ENCODE measurements at regions of chr6 and their contacts with region 1.

Region 1: GRCh38 chr6:20056350-20056992 is 155.8 kb downstream of the MBOAT1 start:
- DNase-seq: no peak
- H3K4me3 ChIP-seq: no peak overlapping the region
- H3K27ac ChIP-seq: no peak overlapping the region
- H3K4me1 ChIP-seq: no peaks in the 10 kb centered on the region
- H3K27me3 ChIP-seq: no peaks in the 10 kb centered on the region
- CTCF ChIP-seq: peak; percentile 34

Region 2: DNA sequence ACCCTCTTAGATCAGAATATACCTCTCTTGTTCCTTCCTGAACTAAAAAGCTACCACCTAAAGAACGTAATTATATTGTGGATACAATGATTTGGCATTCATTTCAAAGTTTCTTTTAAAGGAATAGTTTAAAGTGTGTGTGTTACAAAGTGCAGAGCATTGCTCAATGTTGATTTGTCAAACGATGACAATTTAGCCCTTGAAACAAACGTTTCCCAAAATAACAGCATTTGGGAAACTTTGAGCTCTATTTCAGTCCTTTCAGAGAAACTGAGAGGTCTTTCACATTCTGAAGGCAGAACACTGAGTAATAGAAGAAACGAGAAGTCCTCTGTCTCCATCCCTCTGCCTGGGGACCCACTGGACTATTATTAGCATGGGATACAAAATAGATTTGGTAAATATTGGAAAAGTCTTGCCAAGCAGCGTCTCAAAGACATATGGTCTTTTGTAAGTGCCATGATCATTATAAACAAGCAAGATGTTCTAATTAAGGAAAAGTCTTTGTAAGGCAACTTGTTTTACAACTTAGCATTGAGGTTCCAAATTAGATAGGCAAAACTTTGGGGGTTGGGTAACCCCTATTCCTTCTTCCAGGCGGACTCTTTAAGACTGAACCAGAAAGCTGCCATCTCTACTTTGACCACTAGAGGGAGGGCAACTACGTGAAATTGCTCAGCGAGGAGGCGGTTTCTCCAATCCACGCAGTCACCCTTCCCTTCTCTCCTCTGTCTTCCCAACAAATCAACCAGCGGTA is 1460.5 kb before region 1 on chr6:
- intact Hi-C with region 1: loop called (anchors 10 kb)
- DNase-seq: peak; percentile 73
- H3K4me3 ChIP-seq: no peak overlapping the region
- H3K27ac ChIP-seq: no peak overlapping the region
- H3K4me1 ChIP-seq: no peaks in the 10 kb centered on the region
- H3K27me3 ChIP-seq: no peaks in the 10 kb centered on the region
- CTCF ChIP-seq: peak; percentile 88

Region 3: GRCh38 chr6:18752278-18753068 is 1304.0 kb before region 1 on chr6:
- intact Hi-C with region 1: loop called (anchors 10 kb)
- DNase-seq: no peak
- H3K4me3 ChIP-seq: no peak overlapping the region
- H3K27ac ChIP-seq: no peak overlapping the region
- H3K4me1 ChIP-seq: no peaks in the 10 kb centered on the region
- H3K27me3 ChIP-seq: no peaks in the 10 kb centered on the region
- CTCF ChIP-seq: no peak

Region 4: DNA sequence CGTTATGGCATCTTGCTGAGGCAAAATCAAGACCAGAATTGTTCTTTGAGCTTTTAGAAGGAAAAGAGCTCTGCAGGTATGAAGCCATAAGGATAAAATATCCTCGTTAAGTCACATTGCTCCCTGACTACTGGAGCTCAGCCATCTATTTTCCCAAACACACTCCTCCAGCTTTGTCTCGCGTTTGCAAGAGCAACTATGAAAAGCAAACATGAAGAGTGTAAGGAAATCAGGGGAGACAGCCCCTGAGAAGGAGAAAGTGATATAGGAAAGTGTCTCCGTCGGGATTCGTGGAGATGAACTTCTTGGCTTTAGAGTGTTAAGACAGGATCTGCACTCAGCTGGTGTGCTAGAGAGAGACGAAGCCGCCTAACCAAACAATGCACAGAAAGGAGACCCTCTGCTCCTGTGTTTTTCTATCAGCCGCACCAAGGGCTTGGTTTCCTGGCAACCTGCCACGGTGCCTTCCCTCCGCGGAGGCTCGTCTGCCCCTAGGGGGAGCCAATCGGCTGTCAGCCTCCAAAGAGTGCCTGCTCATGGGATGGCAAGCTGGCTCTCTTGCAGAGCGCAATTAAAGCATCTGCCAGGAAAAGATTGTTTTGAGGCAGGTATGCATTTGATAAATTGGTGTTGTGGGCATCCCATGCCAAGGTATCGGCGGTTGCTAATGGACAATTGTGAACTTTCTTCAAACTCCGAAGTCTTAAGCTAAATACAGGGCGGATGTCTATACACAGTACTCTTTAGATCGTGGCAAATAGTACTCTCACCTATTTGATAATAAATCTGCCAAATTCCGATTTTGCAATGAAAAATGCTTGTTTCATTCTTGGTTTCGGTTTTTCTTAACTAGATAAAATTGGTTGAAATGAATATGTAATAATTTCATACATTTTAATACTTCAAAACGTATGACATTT is 1066.2 kb before region 1 on chr6:
- intact Hi-C with region 1: loop called (anchors 10 kb)
- DNase-seq: peak; percentile 74
- H3K4me3 ChIP-seq: no peak overlapping the region
- H3K27ac ChIP-seq: no peak overlapping the region
- H3K4me1 ChIP-seq: no peaks in the 10 kb centered on the region
- H3K27me3 ChIP-seq: no peaks in the 10 kb centered on the region
- CTCF ChIP-seq: peak; percentile 44

Region 5: DNA sequence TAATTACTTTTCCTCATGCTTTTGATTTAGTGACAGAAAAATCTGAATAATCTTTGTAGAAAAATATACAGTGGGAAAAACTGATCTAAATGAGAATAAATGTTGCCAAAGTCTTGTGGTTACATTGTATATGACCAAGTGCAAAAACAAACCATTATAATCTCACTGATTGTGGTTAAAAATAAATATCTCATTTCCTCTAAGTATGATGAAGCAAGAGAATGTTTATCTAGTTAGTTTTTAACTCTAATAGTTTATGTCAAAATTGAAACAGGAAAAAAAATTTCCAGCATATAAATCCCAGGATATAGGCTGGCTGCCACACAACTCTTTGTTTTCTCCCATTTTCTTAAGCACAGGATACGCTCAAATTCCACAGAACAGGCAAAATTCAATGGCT is 612.0 kb before region 1 on chr6:
- intact Hi-C with region 1: no loop called
- DNase-seq: no peak
- H3K4me3 ChIP-seq: no peak overlapping the region
- H3K27ac ChIP-seq: no peak overlapping the region
- H3K4me1 ChIP-seq: no peaks in the 10 kb centered on the region
- H3K27me3 ChIP-seq: no peaks in the 10 kb centered on the region
- CTCF ChIP-seq: no peak

Region 6: GRCh38 chr6:20319520-20320357 is 263.3 kb after region 1 on chr6:
- intact Hi-C with region 1: no loop called
- DNase-seq: peak; percentile 24
- H3K4me3 ChIP-seq: peak overlapping the region; percentile 5
- H3K27ac ChIP-seq: peak overlapping the region; percentile 53
- H3K4me1 ChIP-seq: no peaks in the 10 kb centered on the region
- H3K27me3 ChIP-seq: no peaks in the 10 kb centered on the region
- CTCF ChIP-seq: no peak

Region 7: GRCh38 chr6:20366091-20366832 is 309.8 kb after region 1 on chr6:
- intact Hi-C with region 1: no loop called
- DNase-seq: no peak
- H3K4me3 ChIP-seq: no peak overlapping the region
- H3K27ac ChIP-seq: no peak overlapping the region
- H3K4me1 ChIP-seq: no peaks in the 10 kb centered on the region
- H3K27me3 ChIP-seq: no peaks in the 10 kb centered on the region
- CTCF ChIP-seq: no peak

Measured in colonic mucosa (tissue), 4 donors.